GM10248 (cell line): ENCODE measurements at regions of chr18 and their contacts with region 1.

Region 1: GRCh38 chr18:56684277-56684676 is 33.1 kb downstream of the WDR7 start:
- DNase-seq: no peak
- CTCF ChIP-seq: no peak

Region 2: DNA sequence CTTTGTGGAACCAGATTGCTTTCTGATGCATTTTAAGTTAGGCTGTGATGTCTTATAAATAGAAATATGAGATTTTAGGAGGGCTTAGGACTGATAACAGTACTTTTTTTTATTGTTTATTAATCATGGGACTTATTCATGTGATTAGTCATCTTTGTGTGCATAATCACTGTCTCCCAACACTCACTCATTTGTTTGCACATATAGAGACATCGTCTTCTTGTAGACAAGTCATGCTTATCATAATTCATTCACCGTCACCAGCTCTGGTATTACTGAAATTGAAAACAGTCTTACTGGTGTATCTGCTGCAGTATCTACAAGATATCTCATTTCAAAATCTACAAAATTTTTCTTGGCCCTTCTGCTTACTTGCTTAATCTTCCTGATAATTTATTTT is 12.7 kb after region 1 on chr18:
- CTCF ChIA-PET with region 1: interaction called, 20 read pairs
- POLR2A ChIA-PET with region 1: no interaction called
- DNase-seq: no peak
- CTCF ChIP-seq: no peak